ENCODE measurements at regions of chr4 and their contacts with region 1.

Region 1: GRCh38 chr4:43048570-43048969 is 156.1 kb downstream of the GRXCR1 start:
- DNase-seq: no peak

Region 2: DNA sequence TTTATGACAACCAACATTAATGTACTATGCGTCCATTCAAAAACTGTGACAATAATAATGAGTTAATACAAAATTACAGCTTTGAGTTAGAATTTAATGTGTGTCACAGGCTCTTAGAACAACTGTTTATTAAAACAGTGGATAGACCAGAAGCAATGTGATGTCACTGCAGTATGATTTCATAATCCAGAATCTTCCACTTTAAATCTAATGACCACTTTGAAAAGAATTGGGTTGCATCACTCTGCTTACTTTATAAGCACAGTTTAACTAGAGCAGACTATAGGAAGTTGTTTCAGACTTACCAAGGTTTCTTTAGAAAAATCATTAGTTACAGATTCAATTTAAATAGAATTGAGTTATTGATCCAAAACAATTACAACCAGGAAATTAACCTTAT is 641.5 kb after region 1 on chr4:
- intact Hi-C with region 1: no loop called
- DNase-seq: no peak

Region 3: GRCh38 chr4:43782391-43782790 is 733.8 kb after region 1 on chr4:
- intact Hi-C with region 1: loop called in 1 of 2 experiments (anchors 5 kb)
- DNase-seq: no peak